Sciatic nerve (tissue), 2 donors: ENCODE measurements at regions of chr5 and their contacts with region 1.

Region 1: GRCh38 chr5:6632917-6633468 is at the starts of genes NSUN2 and SRD5A1:
- DNase-seq: peak; percentile 93
- ATAC-seq: peak; percentile 99
- total RNA-seq, gene NSUN2: 53.0 TPM
- total RNA-seq, gene SRD5A1: 9.6 TPM

Region 2: GRCh38 chr5:6712577-6713275 is 79.7 kb after region 1 on chr5:
- intact Hi-C with region 1: loop called (anchors 10 kb)
- DNase-seq: peak; percentile 98
- ATAC-seq: peak; percentile 96

Region 3: GRCh38 chr5:6745706-6746222 is 112.8 kb after region 1 on chr5:
- intact Hi-C with region 1: loop called (anchors 10 kb)
- DNase-seq: no peak
- ATAC-seq: peak; percentile 72